ENCODE measurements at regions of chr5 and their contacts with region 1.

Region 1: DNA sequence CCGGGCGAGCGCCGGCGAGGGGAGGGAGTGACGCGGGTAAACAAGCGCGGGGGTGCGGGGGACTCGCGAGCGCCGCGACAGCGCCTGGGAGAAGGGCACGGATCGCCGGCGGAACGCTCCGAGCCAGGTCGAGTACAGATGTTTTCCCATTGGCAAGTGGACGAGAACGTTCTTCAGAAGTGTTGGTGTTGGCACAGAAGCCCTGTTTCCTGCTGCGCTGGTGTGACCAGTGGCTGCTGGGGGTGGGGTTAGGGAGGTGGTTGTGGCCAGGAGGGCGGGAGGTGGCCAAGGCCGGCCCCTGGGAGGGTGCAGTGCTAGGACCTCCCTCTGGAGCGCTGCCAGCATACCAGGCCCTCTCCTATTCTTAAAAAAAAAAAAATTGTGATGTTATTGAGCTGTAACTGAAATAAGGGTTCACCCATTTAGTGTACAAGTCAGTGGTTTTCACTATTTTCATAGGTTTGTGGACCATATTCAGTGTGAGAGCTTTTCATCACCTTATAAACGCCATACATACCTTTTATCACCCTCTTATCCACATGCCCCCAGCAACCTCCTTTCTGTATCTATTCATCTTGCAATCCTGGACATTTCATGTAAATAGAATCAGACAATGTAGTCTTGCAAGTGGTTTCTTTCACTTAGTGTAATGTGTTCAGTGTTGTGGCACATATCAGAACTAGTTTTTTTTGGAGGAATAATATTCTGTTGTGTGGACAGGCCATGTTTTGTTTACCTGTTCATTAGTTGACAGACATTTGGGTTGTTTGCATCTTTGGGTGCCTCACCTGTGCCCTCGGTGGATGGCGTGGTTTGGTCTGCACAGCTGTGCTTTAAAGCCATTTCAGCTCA is 1.1 kb downstream of the SQSTM1 start:
- DNase-seq: peak; percentile 83
- H3K4me3 Mint-ChIP-seq: peak overlapping the region; percentile 91
- H3K27ac Mint-ChIP-seq: peak overlapping the region; percentile 93
- H3K4me1 Mint-ChIP-seq: peaks cover 31% of the 10 kb centered on the region
- H3K27me3 Mint-ChIP-seq: no peaks in the 10 kb centered on the region

Region 2: DNA sequence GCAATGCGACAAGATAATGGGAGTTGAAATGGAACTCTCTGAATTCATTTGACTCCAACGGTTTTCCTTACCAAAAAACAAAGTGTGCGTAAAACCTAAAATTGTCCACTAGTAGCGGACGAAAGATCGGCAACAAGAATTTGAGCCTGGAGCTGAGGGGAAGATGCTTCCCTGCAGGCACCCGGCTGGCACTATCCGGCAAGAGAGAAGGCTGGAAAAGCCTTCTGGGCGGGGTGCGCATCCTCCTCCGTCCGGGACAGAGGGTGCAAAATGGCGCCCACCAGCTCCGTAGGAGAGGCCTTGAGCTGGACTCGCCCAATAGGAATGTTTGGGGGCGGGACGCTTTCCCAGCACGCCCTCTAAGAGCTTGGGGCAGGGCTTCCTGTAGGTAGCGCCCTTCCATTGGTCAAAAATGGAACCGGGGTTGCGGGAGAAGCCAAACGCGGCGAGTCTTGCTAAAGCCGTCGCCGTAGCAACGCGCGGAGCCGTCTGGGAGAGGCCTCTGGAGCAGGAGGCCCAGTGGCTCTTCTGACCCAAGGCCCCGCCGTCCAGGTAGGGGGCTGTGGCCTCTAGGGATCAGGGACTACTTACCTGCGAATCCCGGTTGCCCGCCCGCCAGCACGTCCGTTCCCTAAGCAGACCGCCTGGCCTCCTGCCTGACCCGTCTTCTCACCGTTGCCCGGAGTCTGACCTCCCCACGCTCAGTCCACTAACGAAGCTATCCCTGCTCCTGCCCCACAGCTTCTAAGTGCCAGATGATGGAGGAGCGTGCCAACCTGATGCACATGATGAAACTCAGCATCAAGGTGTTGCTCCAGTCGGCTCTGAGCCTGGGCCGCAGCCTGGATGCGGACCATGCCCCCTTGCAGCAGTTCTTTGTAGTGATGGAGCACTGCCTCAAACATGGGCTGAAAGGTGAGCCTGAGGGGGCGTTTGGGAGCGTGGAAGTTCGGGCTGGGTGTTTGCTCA is 262.2 kb before region 1 on chr5:
- intact Hi-C with region 1: loop called (anchors 10 kb)
- DNase-seq: peak; percentile 92
- H3K4me3 Mint-ChIP-seq: peak overlapping the region; percentile 90
- H3K27ac Mint-ChIP-seq: peak overlapping the region; percentile 77
- H3K4me1 Mint-ChIP-seq: peaks cover 20% of the 10 kb centered on the region
- H3K27me3 Mint-ChIP-seq: no peaks in the 10 kb centered on the region

Region 3: GRCh38 chr5:179697993-179698934 is 123.5 kb before region 1 on chr5:
- intact Hi-C with region 1: loop called (anchors 1 kb)
- DNase-seq: peak; percentile 99
- H3K4me3 Mint-ChIP-seq: peak overlapping the region; percentile 99
- H3K27ac Mint-ChIP-seq: peak overlapping the region; percentile 100
- H3K4me1 Mint-ChIP-seq: peaks cover 28% of the 10 kb centered on the region
- H3K27me3 Mint-ChIP-seq: no peaks in the 10 kb centered on the region

Region 4: GRCh38 chr5:179836225-179837019 is 14.6 kb after region 1 on chr5:
- intact Hi-C with region 1: loop called (anchors 2 kb)
- DNase-seq: peak; percentile 64
- H3K4me3 Mint-ChIP-seq: peak overlapping the region; percentile 22
- H3K27ac Mint-ChIP-seq: peak overlapping the region; percentile 89
- H3K4me1 Mint-ChIP-seq: peaks cover 15% of the 10 kb centered on the region
- H3K27me3 Mint-ChIP-seq: no peaks in the 10 kb centered on the region

Region 5: GRCh38 chr5:179858586-179859427 is 37.0 kb after region 1 on chr5 and contains the start of gene MRNIP:
- intact Hi-C with region 1: loop called (anchors 5 kb)
- DNase-seq: peak; percentile 86
- H3K4me3 Mint-ChIP-seq: peak within 1 kb of the TSS; percentile 96
- H3K27ac Mint-ChIP-seq: peak within 1 kb of the TSS; percentile 74
- H3K4me1 Mint-ChIP-seq: peaks cover 9% of the 10 kb centered on the region
- H3K27me3 Mint-ChIP-seq: no peaks in the 10 kb centered on the region
- total RNA-seq, gene MRNIP: 24.4 and 30.1 TPM in 2 replicates